A549 (cell line): ENCODE measurements at regions of chr3 and their contacts with region 1.

Region 1: DNA sequence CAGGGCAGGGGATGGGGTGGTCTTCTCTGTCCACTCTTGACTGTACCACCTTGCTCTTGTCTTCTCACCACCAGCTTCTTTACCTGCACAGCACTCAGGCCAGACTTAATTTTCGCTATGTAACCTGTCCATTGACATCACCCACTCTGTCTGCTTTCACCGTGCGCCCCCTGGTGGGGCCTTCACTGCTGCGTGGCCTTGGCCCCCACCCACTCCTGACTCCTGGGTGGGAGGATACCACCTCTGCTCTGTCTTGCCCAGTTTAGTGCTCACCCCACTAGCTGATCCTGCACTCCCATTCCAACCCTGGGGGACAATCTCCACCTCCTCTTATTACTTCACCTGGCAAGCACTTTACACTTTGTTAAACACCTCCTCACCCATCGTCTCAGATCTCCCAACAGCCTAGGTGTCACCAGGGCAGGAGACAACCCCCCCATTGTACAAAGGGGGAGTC is 17.7 kb downstream of the PTH1R start:
- DNase-seq: peak; percentile 53 to 58
- ATAC-seq: peak; percentile 48 to 72; a peak in 5 of 6 replicates
- H3K4me3 ChIP-seq: no peak overlapping the region
- H3K27ac ChIP-seq: no peak overlapping the region
- H3K4me1 ChIP-seq: peaks cover 9% of the 10 kb centered on the region; the same call in 1 of the 3 replicates
- CTCF ChIP-seq: peak; percentile 67
- EP300 ChIP-seq: no peak
- POLR2A ChIP-seq: no peak
- RAD21 ChIP-seq: peak; percentile 62 to 75

Region 2: GRCh38 chr3:46705022-46705530 is 190.2 kb before region 1 on chr3:
- CTCF ChIA-PET with region 1: interaction called, 46 read pairs
- POLR2A ChIA-PET with region 1: interaction called, 5 read pairs
- DNase-seq: peak; percentile 51 to 64
- ATAC-seq: peak; percentile 76 to 94
- H3K4me3 ChIP-seq: no peak overlapping the region
- H3K27ac ChIP-seq: no peak overlapping the region
- H3K4me1 ChIP-seq: no peaks in the 10 kb centered on the region
- CTCF ChIP-seq: peak; percentile 79
- EP300 ChIP-seq: no peak
- POLR2A ChIP-seq: no peak
- RAD21 ChIP-seq: peak; percentile 88 to 90

Region 3: DNA sequence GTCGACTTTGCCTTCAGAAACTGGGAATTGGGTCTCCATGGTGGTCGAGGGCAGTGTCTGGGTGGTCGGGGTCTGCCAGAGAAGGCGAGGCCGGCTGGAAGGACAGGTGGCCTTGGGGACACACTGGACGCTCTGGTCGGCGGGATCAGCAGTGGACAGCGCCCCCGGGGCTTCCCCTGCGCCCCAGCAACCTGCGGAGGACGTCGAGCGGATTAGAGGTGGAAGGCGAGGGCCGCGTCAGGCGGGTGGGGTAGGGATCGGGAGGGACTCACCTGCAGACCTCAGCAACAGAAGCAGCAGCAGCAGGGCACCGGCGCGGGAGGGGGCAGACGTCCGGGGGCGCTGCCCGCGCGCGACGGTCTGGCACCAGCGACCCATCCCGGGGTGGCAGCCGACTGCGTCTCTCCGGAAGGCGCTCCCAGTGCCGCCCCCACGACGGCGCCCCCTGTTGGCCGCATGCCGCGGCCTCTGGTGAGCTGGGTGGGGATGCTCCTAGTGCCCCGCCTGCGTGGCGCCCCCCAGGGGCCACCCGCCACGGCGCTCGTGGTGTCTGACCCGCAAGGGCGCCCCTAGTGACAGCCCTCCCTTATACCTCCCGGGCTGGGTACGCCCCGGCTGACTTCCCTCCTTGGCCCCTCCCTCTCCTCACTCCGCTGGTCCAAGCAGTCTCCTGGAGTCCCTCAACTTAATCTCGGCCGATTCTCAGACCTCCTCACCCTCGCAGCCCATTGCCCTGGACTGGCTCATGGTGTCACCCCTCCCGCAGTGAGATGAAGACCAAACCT is 177.6 kb before region 1 on chr3 and contains the start of gene PRSS50:
- CTCF ChIA-PET with region 1: interaction called, 10 read pairs
- POLR2A ChIA-PET with region 1: no interaction called
- DNase-seq: no peak
- ATAC-seq: peak in 1 of 2 experiments; percentile 76; a peak in 3 of 6 replicates
- H3K4me3 ChIP-seq: no peak within 1 kb of the TSS
- H3K27ac ChIP-seq: no peak within 1 kb of the TSS
- H3K4me1 ChIP-seq: no peaks in the 10 kb centered on the region; the same call in 2 of the 3 replicates
- CTCF ChIP-seq: peak; percentile 13; the same call in 2 of the 3 replicates
- EP300 ChIP-seq: no peak
- POLR2A ChIP-seq: no peak
- RAD21 ChIP-seq: no peak
- polyA plus RNA-seq, gene PRSS50: not detected in 2 replicates

Region 4: DNA sequence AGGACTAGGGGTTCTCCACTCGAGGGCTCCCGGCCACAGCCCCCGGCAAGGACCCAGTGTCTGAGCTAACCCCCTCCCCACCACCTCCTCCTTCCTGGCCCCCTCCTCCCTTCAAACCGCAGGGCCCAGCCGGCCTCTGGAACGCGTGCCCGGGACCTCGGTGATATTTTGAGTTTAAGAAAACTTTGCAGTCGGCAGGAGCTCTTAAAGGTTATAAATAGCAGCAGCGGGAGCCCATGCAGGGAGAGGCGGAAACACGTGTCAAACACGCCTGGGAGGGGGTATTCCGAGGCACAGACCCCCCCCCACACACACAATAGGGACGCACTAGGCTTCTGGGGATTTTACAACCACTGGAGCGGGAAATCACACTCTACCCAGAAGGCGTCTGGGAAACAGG is 20.8 kb before region 1 on chr3:
- CTCF ChIA-PET with region 1: interaction called, 12 read pairs
- POLR2A ChIA-PET with region 1: no interaction called
- DNase-seq: no peak
- ATAC-seq: no peak
- H3K4me3 ChIP-seq: no peak overlapping the region
- H3K27ac ChIP-seq: no peak overlapping the region
- H3K4me1 ChIP-seq: peaks cover 17% of the 10 kb centered on the region
- CTCF ChIP-seq: no peak
- EP300 ChIP-seq: no peak
- POLR2A ChIP-seq: no peak
- RAD21 ChIP-seq: no peak

Region 5: GRCh38 chr3:46882377-46883053 is 12.7 kb before region 1 on chr3:
- CTCF ChIA-PET with region 1: interaction called, 15 read pairs
- POLR2A ChIA-PET with region 1: no interaction called
- DNase-seq: peak in 1 of 2 experiments; percentile 16
- ATAC-seq: peak; percentile 33 to 71; a peak in 4 of 6 replicates
- H3K4me3 ChIP-seq: peak overlapping the region; percentile 56
- H3K27ac ChIP-seq: peak overlapping the region; percentile 37 to 76; a peak in 4 of 6 replicates
- H3K4me1 ChIP-seq: peaks cover 21% of the 10 kb centered on the region
- CTCF ChIP-seq: no peak
- EP300 ChIP-seq: no peak
- POLR2A ChIP-seq: no peak
- RAD21 ChIP-seq: no peak

Region 6: DNA sequence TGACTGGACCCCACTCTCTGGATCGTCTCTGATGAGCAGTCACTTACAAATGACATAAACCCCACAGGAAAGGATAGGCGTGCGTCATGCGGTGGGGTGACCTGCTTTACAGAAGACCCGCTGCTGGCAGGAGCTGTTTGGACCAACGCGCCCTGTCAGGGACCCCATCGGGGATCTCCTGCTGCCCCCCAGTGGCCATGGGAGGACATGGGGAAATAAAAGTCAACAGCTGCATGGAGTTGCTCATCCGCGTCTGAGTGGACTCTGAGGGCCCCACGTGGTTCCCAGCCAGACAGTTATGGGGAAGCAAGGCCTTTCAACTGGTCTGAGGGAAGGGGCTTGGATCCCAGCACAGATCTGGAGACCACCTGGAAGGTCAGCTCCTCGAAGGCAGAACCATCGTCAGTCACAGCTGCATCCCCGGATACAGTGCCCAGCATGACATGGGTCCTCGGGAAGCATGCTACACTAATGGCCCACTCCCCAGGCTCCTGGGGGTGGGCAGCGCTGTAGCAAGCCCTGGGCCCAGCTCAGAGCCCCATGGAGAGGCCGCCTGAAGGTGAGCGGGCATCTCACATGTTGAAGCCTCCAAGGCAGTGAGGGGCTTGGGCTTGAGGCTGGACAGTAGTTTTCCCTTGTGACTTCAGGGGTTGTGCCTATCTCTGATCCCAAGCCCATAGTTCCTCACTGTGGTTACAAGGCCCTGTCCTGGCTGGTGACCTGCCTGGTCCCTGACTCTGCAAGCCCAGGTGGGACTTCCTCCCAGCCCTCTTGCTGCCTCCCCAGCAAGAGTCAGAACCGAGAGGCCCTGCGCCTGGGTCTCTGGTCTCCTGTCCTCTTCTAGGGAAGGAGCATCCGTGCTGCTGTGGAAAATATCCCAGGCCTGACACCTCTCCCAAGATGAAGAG is 14.6 kb after region 1 on chr3:
- CTCF ChIA-PET with region 1: interaction called, 22 read pairs
- POLR2A ChIA-PET with region 1: no interaction called
- DNase-seq: peak; percentile 70 to 88
- ATAC-seq: peak; percentile 73 to 88
- H3K4me3 ChIP-seq: no peak overlapping the region
- H3K27ac ChIP-seq: peak overlapping the region; percentile 53 to 76; a peak in 5 of 6 replicates
- H3K4me1 ChIP-seq: peaks cover 17% of the 10 kb centered on the region
- CTCF ChIP-seq: peak; percentile 72
- EP300 ChIP-seq: no peak
- POLR2A ChIP-seq: no peak
- RAD21 ChIP-seq: peak; percentile 72 to 79